ENCODE measurements at regions of chr11 and their contacts with region 1.

Region 1: GRCh38 chr11:59142530-59143507 is at the start of gene FAM111A:
- DNase-seq: peak; percentile 58 to 95 (median 87)
- ATAC-seq: peak; percentile 83
- H3K4me3 ChIP-seq: peak within 1 kb of the TSS; percentile 84 to 95
- H3K4me3 Mint-ChIP-seq: peak within 1 kb of the TSS; percentile 98
- H3K27ac ChIP-seq: peak within 1 kb of the TSS; percentile 81 to 95
- H3K27ac Mint-ChIP-seq: peak within 1 kb of the TSS; percentile 97
- H3K4me1 ChIP-seq: peaks cover 31% of the 10 kb centered on the region
- H3K4me1 Mint-ChIP-seq: peaks cover 54% of the 10 kb centered on the region
- H3K27me3 ChIP-seq: no peaks in the 10 kb centered on the region
- H3K27me3 Mint-ChIP-seq: no peaks in the 10 kb centered on the region
- CTCF ChIP-seq: peak; percentile 45
- total RNA-seq, gene FAM111A: 23.3 to 33.4 TPM

Region 2: DNA sequence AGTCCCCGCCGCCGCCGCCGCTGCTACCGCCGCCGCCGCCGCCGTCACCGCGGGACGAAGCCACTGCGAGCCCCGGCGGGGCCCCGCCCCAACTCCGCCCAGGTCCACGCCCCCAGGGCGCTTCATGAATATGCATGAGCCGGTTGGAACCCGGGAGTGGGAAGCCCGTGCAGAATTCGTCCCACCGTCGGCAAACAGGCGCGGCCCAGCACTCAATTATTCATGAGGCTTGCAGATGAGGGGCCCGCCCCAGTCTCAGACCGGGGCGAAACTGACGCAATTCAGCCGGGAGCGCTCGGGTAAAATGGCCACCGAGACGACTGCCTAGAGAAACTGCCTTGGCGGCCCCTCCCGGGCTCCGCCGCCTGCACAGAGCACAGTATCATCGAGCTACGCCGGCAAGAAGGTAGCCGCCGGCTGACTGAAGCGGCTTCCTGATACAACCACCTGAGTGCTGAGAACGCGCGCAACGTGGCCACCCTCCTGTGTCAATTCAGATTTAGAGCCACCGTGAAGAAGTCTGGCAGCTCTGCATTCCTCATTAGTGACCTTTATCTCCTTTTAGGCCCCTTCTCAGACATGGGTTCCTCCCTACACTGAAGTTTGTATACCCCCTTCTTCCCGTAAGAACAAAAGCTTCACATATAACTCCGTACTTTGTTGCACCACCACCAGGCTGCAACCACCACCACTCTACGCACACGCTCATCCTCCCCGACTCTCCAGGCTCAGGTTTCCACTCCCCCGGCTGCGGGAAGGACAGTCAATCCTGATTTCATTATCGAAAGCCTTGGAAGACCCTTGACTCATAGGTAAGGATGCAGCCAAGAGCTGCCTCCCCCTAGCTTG is 1817.7 kb before region 1 on chr11 and contains the start of gene TNKS1BP1:
- CTCF ChIA-PET with region 1: no interaction called
- POLR2A ChIA-PET with region 1: no interaction called
- intact Hi-C with region 1: loop called (anchors 5 to 10 kb)
- DNase-seq: peak; percentile 74 to 93 (median 88)
- ATAC-seq: peak; percentile 88
- H3K4me3 ChIP-seq: peak within 1 kb of the TSS; percentile 75 to 98
- H3K4me3 Mint-ChIP-seq: peak within 1 kb of the TSS; percentile 87
- H3K27ac ChIP-seq: peak within 1 kb of the TSS; percentile 80 to 81
- H3K27ac Mint-ChIP-seq: peak within 1 kb of the TSS; percentile 96
- H3K4me1 ChIP-seq: peaks cover 29% of the 10 kb centered on the region
- H3K4me1 Mint-ChIP-seq: peaks cover 34% of the 10 kb centered on the region
- H3K27me3 ChIP-seq: no peaks in the 10 kb centered on the region
- H3K27me3 Mint-ChIP-seq: no peaks in the 10 kb centered on the region
- CTCF ChIP-seq: no peak
- total RNA-seq, gene TNKS1BP1: 13.5 to 14.0 TPM

Region 3: DNA sequence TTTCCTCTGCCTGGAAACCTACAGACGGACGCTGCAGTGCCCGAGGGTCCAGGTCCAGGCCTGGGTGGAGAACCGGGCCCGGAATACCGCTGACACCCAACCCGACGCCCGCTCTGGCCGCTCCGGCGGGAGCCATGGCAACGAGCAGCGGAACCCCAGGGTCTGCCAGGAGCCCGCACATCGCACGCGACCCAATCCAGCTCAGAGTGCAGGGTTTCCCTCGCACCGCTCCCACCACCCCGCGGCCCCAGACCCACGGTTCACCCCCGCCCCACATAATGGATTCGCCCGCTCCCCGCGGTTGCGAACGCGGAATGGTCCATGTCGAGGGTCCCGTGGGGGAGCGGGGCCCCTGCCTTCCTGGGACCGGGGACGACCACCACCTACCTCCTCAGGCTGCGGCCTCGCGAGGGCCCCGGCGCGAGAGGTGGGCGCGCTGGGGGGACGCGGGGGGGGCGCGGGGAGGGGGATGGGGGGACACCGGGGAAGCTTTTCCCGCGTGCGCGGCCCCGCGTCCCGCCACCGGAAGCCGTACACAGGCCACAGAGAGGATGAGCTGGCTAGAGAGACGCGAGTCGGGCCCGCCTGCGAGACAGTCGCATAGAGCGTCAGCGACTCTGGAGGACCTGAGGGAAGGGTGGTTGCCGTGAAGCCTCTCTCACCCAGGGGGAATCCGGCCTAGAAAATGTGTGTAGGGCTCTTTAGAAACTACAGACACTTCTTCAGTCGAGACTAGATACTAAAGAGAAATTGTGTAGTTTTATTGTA is 1807.3 kb before region 1 on chr11 and contains the start of gene SSRP1:
- CTCF ChIA-PET with region 1: no interaction called
- POLR2A ChIA-PET with region 1: no interaction called
- intact Hi-C with region 1: loop called in 1 of 2 experiments (anchors 5 kb)
- DNase-seq: peak; percentile 70 to 95 (median 86)
- ATAC-seq: peak; percentile 96
- H3K4me3 ChIP-seq: peak within 1 kb of the TSS; percentile 78 to 82
- H3K4me3 Mint-ChIP-seq: peak within 1 kb of the TSS; percentile 86
- H3K27ac ChIP-seq: peak within 1 kb of the TSS; percentile 83 to 91
- H3K27ac Mint-ChIP-seq: peak within 1 kb of the TSS; percentile 94
- H3K4me1 ChIP-seq: peaks cover 23% of the 10 kb centered on the region
- H3K4me1 Mint-ChIP-seq: peaks cover 33% of the 10 kb centered on the region
- H3K27me3 ChIP-seq: no peaks in the 10 kb centered on the region
- H3K27me3 Mint-ChIP-seq: no peaks in the 10 kb centered on the region
- CTCF ChIP-seq: no peak
- total RNA-seq, gene SSRP1: 34.3 to 36.3 TPM

Region 4: GRCh38 chr11:57657194-57658022 is 1485.4 kb before region 1 on chr11 and contains the start of gene CLP1:
- CTCF ChIA-PET with region 1: no interaction called
- POLR2A ChIA-PET with region 1: no interaction called
- intact Hi-C with region 1: loop called (anchors 2 to 5 kb)
- DNase-seq: peak; percentile 97 to 100 (median 99)
- ATAC-seq: peak; percentile 94
- H3K4me3 ChIP-seq: peak within 1 kb of the TSS; percentile 59 to 74
- H3K4me3 Mint-ChIP-seq: peak within 1 kb of the TSS; percentile 94
- H3K27ac ChIP-seq: peak within 1 kb of the TSS; percentile 83
- H3K27ac Mint-ChIP-seq: peak within 1 kb of the TSS; percentile 90
- H3K4me1 ChIP-seq: peaks cover 11% of the 10 kb centered on the region
- H3K4me1 Mint-ChIP-seq: peaks cover 43% of the 10 kb centered on the region
- H3K27me3 ChIP-seq: no peaks in the 10 kb centered on the region
- H3K27me3 Mint-ChIP-seq: no peaks in the 10 kb centered on the region
- CTCF ChIP-seq: no peak
- total RNA-seq, gene CLP1: 22.7 to 27.1 TPM

Region 5: DNA sequence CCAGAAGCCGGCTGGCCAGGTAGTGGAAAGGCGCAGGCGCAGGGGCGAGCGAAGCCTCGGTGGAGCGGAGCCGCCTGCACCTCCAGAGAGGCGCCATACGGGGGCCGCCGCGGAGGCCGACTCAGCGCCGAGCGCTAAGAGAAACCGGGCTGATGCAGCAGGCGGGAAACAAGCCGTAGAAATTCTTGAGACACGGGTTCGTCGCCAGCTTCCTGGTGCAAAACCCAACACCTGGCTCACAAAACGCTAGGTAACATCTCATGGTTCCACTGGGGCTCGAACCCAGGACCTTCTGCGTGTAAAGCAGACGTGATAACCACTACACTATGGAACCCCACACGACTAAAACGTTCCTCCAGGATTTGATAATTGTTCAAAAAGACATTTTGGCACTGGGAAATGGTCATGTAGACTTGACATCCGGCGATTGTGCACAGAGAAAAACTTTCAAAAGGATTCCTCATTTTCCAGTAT is 407.6 kb after region 1 on chr11:
- CTCF ChIA-PET with region 1: no interaction called
- POLR2A ChIA-PET with region 1: no interaction called
- intact Hi-C with region 1: loop called (anchors 10 kb)
- DNase-seq: peak; percentile 68 to 93 (median 79)
- ATAC-seq: peak; percentile 85
- H3K4me3 ChIP-seq: peak overlapping the region; percentile 62 to 67
- H3K4me3 Mint-ChIP-seq: peak overlapping the region; percentile 77
- H3K27ac ChIP-seq: peak overlapping the region; percentile 36 to 48
- H3K27ac Mint-ChIP-seq: peak overlapping the region; percentile 87
- H3K4me1 ChIP-seq: peaks cover 10% of the 10 kb centered on the region
- H3K4me1 Mint-ChIP-seq: peaks cover 23% of the 10 kb centered on the region
- H3K27me3 ChIP-seq: no peaks in the 10 kb centered on the region
- H3K27me3 Mint-ChIP-seq: no peaks in the 10 kb centered on the region
- CTCF ChIP-seq: no peak

Region 6: GRCh38 chr11:59668950-59669610 is 526.3 kb after region 1 on chr11 and contains the start of gene PATL1:
- CTCF ChIA-PET with region 1: no interaction called
- POLR2A ChIA-PET with region 1: interaction called, 3 read pairs
- intact Hi-C with region 1: loop called in 1 of 2 experiments (anchors 2 kb)
- DNase-seq: peak; percentile 98 to 100 (median 99)
- ATAC-seq: peak; percentile 88
- H3K4me3 ChIP-seq: peak within 1 kb of the TSS; percentile 79 to 98
- H3K4me3 Mint-ChIP-seq: peak within 1 kb of the TSS; percentile 98
- H3K27ac ChIP-seq: peak within 1 kb of the TSS; percentile 98 to 99
- H3K27ac Mint-ChIP-seq: peak within 1 kb of the TSS; percentile 100
- H3K4me1 ChIP-seq: peaks cover 22% of the 10 kb centered on the region
- H3K4me1 Mint-ChIP-seq: peaks cover 43% of the 10 kb centered on the region
- H3K27me3 ChIP-seq: no peaks in the 10 kb centered on the region
- H3K27me3 Mint-ChIP-seq: no peaks in the 10 kb centered on the region
- CTCF ChIP-seq: no peak
- total RNA-seq, gene PATL1: 59.5 to 59.6 TPM

Region 7: GRCh38 chr11:59810189-59810910 is 667.5 kb after region 1 on chr11 and contains the start of gene MRPL16:
- CTCF ChIA-PET with region 1: no interaction called
- POLR2A ChIA-PET with region 1: no interaction called
- intact Hi-C with region 1: loop called (anchors 5 to 10 kb)
- DNase-seq: peak; percentile 81 to 95 (median 91)
- ATAC-seq: peak; percentile 99
- H3K4me3 ChIP-seq: peak within 1 kb of the TSS; percentile 97 to 99
- H3K4me3 Mint-ChIP-seq: peak within 1 kb of the TSS; percentile 91
- H3K27ac ChIP-seq: peak within 1 kb of the TSS; percentile 73 to 87
- H3K27ac Mint-ChIP-seq: peak within 1 kb of the TSS; percentile 89
- H3K4me1 ChIP-seq: peaks cover 18% of the 10 kb centered on the region
- H3K4me1 Mint-ChIP-seq: peaks cover 23% of the 10 kb centered on the region
- H3K27me3 ChIP-seq: no peaks in the 10 kb centered on the region
- H3K27me3 Mint-ChIP-seq: peaks cover 4% of the 10 kb centered on the region
- CTCF ChIP-seq: peak; percentile 35
- total RNA-seq, gene MRPL16: 26.5 to 27.8 TPM